ENCODE measurements at regions of chr12 and their contacts with region 1.

Region 1: DNA sequence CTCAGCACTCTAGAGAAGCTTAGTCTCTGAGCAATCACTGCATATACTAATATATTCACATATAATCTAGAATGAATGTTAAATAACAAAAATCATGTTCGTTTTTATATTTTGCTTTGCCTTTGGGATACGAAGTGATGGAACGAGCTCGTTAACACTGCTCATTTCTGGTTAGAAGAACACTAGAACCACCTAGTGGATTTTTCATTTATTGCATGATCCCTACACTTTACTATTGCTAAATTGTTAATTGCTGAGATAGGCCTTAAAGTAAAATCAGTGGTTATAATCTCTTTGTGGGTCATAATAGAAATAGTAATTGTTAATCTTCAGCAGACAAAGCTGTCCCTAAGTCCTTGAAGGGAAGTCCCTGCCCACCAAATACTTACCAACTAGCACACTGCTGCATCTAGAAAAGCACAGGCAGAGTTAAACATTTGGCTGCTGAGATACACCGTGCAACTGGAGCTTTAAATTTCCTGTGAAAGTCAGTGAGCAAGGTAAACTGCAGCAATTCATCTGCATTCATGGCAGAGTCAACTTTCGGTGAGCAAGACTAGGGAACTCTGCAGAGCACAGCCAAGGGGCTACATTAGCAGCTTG is 353.7 kb downstream of the APAF1 start:
- DNase-seq: no peak
- H3K4me3 ChIP-seq: no peak overlapping the region
- H3K27ac ChIP-seq: no peak overlapping the region
- H3K4me1 ChIP-seq: no peaks in the 10 kb centered on the region
- H3K27me3 ChIP-seq: no peaks in the 10 kb centered on the region
- CTCF ChIP-seq: peak in 3 of 4 experiments; percentile 49 to 73 (median 69)
- POLR2A ChIP-seq: no peak

Region 2: GRCh38 chr12:98698603-98699463 is 300.0 kb before region 1 on chr12:
- intact Hi-C with region 1: loop called (anchors 5 kb)
- DNase-seq: peak; percentile 24
- H3K4me3 ChIP-seq: no peak overlapping the region
- H3K27ac ChIP-seq: no peak overlapping the region
- H3K4me1 ChIP-seq: no peaks in the 10 kb centered on the region
- H3K27me3 ChIP-seq: no peaks in the 10 kb centered on the region
- CTCF ChIP-seq: peak in 3 of 4 experiments; percentile 38 to 55 (median 55)
- POLR2A ChIP-seq: no peak

Region 3: GRCh38 chr12:98955277-98955676 is 43.5 kb before region 1 on chr12:
- intact Hi-C with region 1: no loop called
- DNase-seq: no peak
- H3K4me3 ChIP-seq: no peak overlapping the region
- H3K27ac ChIP-seq: no peak overlapping the region
- H3K4me1 ChIP-seq: no peaks in the 10 kb centered on the region
- H3K27me3 ChIP-seq: no peaks in the 10 kb centered on the region
- CTCF ChIP-seq: no peak
- POLR2A ChIP-seq: no peak

Measured in prostate gland (tissue), 2 donors.